Colonic mucosa (tissue), 4 donors: ENCODE measurements at regions of chr5 and their contacts with region 1.

Region 1: DNA sequence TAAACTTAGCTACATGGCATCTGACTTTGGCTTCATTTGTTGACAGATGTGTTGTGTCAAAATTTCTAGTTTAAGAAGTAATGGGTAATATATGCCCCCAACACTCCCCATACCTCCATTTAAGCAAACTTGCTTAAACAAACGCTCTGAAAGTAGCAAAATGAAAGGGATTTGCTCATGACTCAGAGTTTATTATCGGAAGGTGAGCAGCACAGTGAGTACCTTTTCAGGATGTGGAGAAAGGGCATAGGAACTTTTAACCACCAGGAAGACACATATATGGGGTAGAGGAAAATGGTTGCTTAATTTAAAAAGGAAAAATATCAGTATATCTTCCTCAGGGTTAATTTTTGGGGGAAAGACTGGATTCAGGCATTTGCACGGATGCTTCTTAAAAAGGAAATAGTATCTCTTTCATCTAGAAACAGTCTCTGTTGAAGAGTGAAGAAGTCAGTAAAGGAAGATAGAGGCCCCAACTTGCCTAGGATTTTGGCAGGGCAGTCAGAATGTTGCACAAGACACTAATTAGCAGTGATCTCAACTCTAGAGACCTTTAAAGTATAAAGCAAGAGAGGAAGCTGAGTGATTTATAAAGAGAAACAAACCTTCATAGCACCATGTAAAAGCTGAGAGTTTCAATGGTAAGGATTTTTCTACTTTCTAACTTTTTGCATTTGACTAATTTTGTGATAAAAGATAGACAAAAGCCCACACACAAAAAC is 155.1 kb downstream of the TRIO start:
- DNase-seq: no peak
- H3K4me3 ChIP-seq: no peak overlapping the region
- H3K27ac ChIP-seq: no peak overlapping the region
- H3K4me1 ChIP-seq: no peaks in the 10 kb centered on the region
- H3K27me3 ChIP-seq: no peaks in the 10 kb centered on the region
- CTCF ChIP-seq: no peak

Region 2: DNA sequence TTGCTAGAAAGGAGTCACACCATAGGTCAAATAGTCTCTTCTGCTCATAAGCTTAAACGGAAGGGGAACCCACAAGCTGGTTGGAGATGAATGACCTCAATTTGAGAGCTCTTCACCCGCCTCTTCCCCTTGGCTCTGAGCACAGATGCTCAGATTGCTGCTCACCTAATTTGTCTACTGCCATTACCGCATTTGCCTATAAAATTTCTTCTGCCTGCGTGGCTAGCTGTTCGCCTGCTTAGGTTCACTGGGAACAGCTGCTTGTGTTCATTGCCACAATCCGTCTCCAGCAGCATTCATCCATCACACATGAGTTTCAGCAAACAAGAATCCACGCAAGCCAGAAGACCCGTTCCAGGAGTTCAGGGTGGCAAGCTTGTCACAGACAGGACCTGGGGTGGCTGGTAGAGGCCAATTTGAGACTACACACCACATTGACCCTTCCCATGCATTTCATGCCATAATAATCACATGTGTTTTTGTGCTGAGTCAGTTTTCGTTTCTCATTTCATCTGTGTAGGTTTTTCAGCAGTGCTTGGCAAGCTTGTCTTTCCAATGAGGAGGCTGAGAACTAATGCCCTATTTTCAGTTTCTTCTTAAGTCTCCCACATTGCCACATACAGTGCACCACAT is 303.6 kb before region 1 on chr5:
- intact Hi-C with region 1: loop called (anchors 10 kb)
- DNase-seq: no peak
- H3K4me3 ChIP-seq: no peak overlapping the region
- H3K27ac ChIP-seq: no peak overlapping the region
- H3K4me1 ChIP-seq: no peaks in the 10 kb centered on the region
- H3K27me3 ChIP-seq: no peaks in the 10 kb centered on the region
- CTCF ChIP-seq: no peak

Region 3: DNA sequence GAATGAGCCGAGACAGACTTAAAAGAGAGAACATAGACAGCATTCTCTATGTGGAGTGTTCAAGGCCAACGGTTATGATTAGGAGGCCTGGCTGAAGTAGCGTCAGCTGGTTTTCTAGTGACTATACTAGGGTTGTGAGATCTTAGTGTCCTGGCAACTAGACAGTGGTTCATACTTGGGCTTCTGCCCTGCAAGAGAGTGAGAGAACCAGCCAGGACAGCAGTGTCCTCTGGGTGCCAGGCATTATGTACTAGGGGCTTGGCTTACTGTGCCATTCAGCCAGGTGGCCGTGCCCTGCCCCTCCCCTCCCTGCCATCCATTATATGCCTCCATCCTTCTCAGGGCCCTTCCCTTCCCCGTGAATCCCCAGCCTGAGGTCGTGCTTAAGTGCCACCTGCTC is 98.4 kb before region 1 on chr5:
- intact Hi-C with region 1: no loop called
- DNase-seq: no peak
- H3K4me3 ChIP-seq: no peak overlapping the region
- H3K27ac ChIP-seq: no peak overlapping the region
- H3K4me1 ChIP-seq: peaks cover 6% of the 10 kb centered on the region
- H3K27me3 ChIP-seq: no peaks in the 10 kb centered on the region
- CTCF ChIP-seq: no peak

Region 4: GRCh38 chr5:14218897-14219580 is 79.2 kb before region 1 on chr5:
- intact Hi-C with region 1: no loop called
- DNase-seq: no peak
- H3K4me3 ChIP-seq: no peak overlapping the region
- H3K27ac ChIP-seq: peak overlapping the region; percentile 79
- H3K4me1 ChIP-seq: peaks cover 12% of the 10 kb centered on the region
- H3K27me3 ChIP-seq: no peaks in the 10 kb centered on the region
- CTCF ChIP-seq: no peak